GM10248 (cell line): ENCODE measurements at regions of chr5 and their contacts with region 1.

Region 1: DNA sequence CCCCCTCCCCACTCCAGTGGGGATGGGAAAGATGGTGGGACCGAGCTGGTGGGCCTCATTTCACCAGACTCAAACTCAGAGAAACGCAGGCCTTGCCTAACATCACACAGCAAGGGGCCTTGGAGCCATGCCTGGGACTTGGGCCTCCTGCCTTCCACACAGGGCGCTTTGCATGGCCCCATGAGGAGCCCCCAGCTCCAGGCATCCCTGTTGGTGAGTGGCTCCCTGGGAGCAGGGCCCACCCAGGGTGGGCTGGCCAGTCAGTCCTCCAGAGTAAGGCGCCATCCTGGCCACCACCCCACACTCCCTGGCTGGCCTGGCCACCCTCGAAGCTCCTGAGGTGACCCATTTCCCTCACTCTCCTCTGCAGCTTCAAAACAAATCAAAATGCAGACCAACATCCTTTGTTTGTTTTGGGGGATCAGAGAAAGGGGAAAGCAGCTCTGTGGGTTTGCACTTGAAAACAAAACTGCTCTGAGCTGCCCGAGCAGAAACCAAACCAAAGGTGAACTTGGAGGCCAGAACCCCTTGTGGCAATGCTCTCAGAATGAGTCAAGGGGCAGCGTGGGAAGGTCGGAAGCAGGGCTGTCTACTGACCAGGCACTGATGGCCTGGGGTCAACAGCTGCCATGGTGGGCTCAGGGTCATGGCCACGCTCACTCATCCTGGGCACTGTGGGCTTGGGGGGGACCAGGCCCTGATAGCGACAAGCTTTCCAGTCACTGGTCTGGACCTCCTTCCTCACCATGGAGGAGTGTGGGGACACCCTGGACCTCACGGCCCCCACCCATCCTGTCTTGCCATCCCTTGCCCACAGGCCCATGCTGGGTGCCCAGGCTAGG is 37.0 kb upstream of the VDAC1 start:
- DNase-seq: peak; percentile 82
- CTCF ChIP-seq: no peak

Region 2: GRCh38 chr5:134004592-134005375 is 37.0 kb before region 1 on chr5 and contains the start of gene VDAC1:
- CTCF ChIA-PET with region 1: interaction called, 18 read pairs
- POLR2A ChIA-PET with region 1: interaction called, 5 read pairs
- DNase-seq: peak; percentile 96
- CTCF ChIP-seq: no peak

Region 3: DNA sequence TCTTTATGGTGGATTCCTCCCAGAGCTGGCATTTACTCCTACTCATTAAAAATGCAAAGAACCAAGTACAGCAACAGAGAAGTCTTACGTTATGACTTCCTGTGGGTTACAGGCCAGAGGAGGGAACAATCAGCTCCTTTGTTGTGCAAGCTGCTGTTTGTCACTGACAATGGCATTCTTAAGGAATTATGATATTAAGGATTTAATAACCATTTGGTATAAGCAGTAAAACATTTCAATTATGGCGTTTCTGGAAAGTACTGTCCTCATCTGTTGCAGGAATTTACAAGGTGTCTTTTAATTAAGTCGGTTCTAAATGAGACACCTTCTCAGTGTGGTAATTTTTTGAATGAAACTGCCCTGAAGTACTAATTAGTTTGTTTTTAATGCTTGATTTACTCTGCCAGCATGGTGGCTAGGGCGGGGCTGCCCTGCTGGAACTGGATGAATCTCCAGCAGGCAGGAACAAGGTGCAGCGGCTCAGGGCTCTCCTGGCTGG is 12.1 kb after region 1 on chr5:
- CTCF ChIA-PET with region 1: interaction called, 77 read pairs
- POLR2A ChIA-PET with region 1: interaction called, 5 read pairs
- DNase-seq: no peak
- CTCF ChIP-seq: no peak

Region 4: DNA sequence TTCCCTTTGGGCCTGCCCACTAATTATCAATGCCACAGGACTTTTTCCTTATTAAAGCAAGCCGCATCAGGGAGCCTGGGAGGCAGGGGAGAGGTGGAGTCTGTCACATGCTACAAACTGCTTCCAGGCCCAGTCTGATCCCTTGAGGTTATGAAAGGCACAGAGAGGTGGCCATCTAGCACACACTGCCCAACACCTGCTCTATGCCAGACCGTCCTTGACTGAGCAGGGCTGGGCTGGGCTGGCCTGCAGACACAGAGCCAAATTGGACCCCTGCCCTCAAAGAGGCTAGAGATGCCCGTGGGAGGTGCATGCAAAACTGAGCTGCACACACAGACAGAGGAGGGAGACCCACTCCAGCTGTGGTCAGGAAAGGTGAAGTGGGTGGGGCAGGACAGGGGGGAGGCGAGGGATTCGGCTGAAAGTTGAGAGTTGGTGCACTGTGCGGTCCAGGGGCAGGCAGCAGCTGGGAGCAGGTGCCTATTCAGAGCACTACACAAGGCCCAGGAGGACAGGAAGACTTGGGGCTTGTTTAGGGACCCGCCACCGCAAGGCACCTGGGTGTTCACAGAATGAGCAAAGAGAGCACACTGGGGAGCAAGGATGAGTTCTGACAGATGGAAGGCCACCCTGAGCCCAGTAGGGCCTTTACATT is 36.3 kb after region 1 on chr5:
- CTCF ChIA-PET with region 1: interaction called, 39 read pairs
- POLR2A ChIA-PET with region 1: no interaction called
- DNase-seq: no peak
- CTCF ChIP-seq: no peak

Region 5: GRCh38 chr5:134161513-134162395 is 120.0 kb after region 1 on chr5:
- CTCF ChIA-PET with region 1: interaction called, 882 read pairs
- POLR2A ChIA-PET with region 1: no interaction called
- DNase-seq: no peak
- CTCF ChIP-seq: no peak

Region 6: DNA sequence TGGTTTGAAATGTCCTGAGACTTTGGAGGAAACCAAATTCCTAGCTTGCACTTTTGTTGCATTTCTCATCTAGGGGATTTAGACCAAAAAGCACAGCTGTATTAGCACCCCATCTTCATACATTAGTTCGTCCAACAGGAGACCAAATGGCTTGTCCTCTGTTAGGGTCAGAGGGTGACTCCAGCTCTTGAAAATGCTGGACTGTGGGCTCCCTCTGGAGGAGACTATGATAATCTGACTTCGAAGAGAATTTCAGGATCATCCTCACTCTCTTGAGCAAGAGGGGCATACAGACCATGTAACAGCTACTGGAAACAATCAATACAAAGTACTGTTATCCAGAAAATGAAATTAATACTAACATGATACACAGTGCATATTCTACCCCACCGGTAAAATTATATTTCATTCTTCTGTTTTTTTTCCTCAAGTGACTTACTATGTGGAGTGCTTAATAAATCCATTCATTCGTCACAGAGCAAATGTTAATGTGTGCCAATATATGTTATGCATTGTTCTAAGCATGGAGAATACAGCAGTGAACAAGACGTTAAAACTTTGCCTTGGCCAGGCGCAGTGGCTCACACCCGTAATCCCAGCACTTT is 247.8 kb after region 1 on chr5:
- CTCF ChIA-PET with region 1: interaction called, 31 read pairs
- POLR2A ChIA-PET with region 1: no interaction called
- DNase-seq: peak; percentile 62
- CTCF ChIP-seq: peak; percentile 56

Region 7: DNA sequence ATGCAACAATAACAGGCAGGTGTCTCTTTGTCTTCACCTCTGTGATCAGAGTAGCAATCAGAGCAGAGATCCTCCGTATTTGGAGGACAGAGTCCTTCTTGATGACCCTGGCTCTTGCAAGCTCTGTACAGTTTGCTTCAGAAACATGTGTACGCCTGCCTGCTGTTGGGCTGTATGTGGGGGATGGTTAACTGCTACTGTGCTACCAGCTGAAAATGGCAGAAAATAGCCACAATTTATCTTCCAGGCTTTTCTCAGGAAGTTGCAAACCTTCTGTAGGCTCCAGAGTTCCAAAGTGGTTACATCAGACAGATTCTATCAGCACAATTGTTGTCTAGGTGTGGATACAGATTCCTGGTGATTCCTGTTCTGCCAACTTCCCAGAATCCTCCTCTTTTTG is 752.3 kb after region 1 on chr5:
- CTCF ChIA-PET with region 1: no interaction called
- POLR2A ChIA-PET with region 1: no interaction called
- DNase-seq: no peak
- CTCF ChIP-seq: no peak